MCF 10A (cell line): ENCODE measurements at regions of chr9 and their contacts with region 1.

Region 1: GRCh38 chr9:4740638-4741364 is at the start of gene AK3:
- DNase-seq: peak; percentile 85
- H3K4me3 Mint-ChIP-seq: peak within 1 kb of the TSS; percentile 90
- H3K27ac Mint-ChIP-seq: peak within 1 kb of the TSS; percentile 97
- H3K4me1 Mint-ChIP-seq: peaks cover 24% of the 10 kb centered on the region
- H3K27me3 Mint-ChIP-seq: no peaks in the 10 kb centered on the region
- CTCF ChIP-seq: no peak
- total RNA-seq, gene AK3: 61.0 and 64.1 TPM in 2 replicates

Region 2: GRCh38 chr9:4604678-4605095 is 136.1 kb before region 1 on chr9:
- CTCF ChIA-PET with region 1: interaction called, 5 read pairs
- POLR2A ChIA-PET with region 1: no interaction called
- intact Hi-C with region 1: loop called (anchors 5 kb)
- DNase-seq: peak; percentile 82
- H3K4me3 Mint-ChIP-seq: no peak overlapping the region
- H3K27ac Mint-ChIP-seq: no peak overlapping the region
- H3K4me1 Mint-ChIP-seq: no peaks in the 10 kb centered on the region
- H3K27me3 Mint-ChIP-seq: no peaks in the 10 kb centered on the region
- CTCF ChIP-seq: peak; percentile 61

Region 3: DNA sequence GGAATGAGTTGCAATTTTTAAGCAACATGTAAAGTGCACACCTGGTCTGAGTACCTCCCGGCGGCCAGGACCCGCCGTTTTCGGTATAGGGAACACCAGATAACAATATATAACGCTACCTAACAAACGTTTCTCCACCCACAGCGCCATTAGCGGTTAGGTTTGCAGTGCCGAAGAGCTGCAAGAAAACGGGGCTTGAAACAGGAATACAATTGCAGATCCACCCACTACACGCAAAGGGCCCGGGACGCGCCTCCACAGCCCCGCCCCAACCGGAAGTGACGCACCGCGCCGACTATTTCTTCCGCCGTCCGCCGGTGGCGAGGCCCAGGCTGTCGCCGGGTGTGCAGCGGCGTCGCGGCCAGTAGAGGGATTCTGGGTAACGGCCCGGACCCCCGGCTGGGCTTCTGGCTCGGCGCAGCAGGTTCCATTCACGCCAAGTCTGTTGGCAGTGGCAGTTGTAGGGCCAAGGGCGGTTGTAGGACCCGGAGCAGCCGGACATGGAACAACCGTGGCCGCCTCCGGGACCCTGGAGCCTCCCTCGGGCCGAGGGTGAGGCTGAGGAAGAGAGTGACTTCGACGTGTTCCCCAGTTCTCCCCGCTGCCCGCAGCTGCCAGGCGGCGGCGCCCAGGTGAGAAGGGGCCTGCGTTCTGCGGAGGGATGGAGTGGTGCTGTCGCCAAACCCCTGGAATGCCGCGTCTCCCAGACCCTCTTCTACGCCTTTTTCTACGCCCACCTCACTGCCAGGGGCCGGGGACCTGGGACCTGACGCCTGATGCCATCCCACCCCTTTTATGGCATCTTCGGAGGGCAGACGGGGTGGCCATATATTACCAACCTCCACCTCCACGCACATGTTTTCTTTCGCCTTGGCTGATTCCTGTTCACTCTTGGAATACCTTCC is 61.3 kb before region 1 on chr9 and contains the start of gene CDC37L1:
- CTCF ChIA-PET with region 1: interaction called, 5 read pairs
- POLR2A ChIA-PET with region 1: interaction called, 48 read pairs
- intact Hi-C with region 1: loop called (anchors 1 kb)
- DNase-seq: peak; percentile 94
- H3K4me3 Mint-ChIP-seq: no peak within 1 kb of the TSS
- H3K27ac Mint-ChIP-seq: no peak within 1 kb of the TSS
- H3K4me1 Mint-ChIP-seq: peaks cover 22% of the 10 kb centered on the region
- H3K27me3 Mint-ChIP-seq: no peaks in the 10 kb centered on the region
- CTCF ChIP-seq: peak; percentile 57
- total RNA-seq, gene CDC37L1: 13.8 and 20.4 TPM in 2 replicates

Region 4: DNA sequence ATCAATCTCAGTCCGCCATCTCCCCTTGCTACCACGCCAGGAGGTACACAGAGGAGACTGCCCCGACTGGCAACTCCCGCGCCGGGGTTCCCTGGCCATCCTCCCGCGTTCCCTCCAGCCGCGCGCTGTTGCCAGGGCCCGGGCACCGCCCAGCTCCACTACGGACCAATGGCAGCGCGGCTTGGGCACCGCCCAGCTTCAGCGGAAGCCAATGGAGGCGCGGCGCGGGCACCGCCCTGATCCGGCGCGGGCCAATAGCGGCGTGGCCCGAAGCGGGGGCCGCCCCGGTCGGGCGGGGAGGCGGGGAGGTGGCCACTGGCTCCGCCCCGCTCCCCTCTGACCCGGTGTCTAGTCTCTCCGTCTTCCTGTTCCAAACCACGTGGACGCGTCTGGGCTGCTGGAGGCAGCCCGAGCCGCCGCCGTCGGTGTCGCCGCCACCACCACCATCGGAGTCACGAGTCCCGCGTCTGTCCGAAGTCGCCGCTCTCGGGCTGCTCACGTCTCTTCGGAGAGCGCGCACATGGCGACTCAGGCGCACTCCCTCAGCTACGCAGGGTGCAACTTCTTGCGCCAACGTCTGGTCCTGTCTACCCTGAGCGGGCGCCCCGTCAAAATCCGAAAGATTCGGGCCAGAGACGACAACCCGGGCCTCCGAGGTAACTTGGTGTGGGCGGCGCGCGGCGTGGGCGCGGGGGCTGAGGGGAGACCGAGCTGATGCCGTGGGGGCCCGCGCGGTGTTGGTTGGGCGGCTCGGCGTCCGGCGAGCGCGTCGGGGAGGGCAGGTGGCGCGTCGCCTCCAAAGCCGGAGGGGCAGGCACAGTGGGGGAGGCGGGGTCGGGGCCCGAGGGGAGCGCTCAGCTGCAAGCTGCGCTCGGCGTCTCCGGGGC is 52.0 kb after region 1 on chr9 and contains the start of gene RCL1:
- CTCF ChIA-PET with region 1: interaction called, 9 read pairs
- POLR2A ChIA-PET with region 1: interaction called, 43 read pairs
- intact Hi-C with region 1: no loop called
- DNase-seq: peak; percentile 95
- H3K4me3 Mint-ChIP-seq: peak within 1 kb of the TSS; percentile 100
- H3K27ac Mint-ChIP-seq: peak within 1 kb of the TSS; percentile 85
- H3K4me1 Mint-ChIP-seq: peaks cover 20% of the 10 kb centered on the region
- H3K27me3 Mint-ChIP-seq: no peaks in the 10 kb centered on the region
- CTCF ChIP-seq: no peak
- total RNA-seq, gene RCL1: 20.2 and 27.8 TPM in 2 replicates

Region 5: GRCh38 chr9:5628530-5629311 is 887.9 kb after region 1 on chr9 and contains the start of gene RIC1:
- CTCF ChIA-PET with region 1: no interaction called
- POLR2A ChIA-PET with region 1: interaction called, 25 read pairs
- intact Hi-C with region 1: no loop called
- DNase-seq: peak; percentile 89
- H3K4me3 Mint-ChIP-seq: peak within 1 kb of the TSS; percentile 88
- H3K27ac Mint-ChIP-seq: peak within 1 kb of the TSS; percentile 92
- H3K4me1 Mint-ChIP-seq: peaks cover 20% of the 10 kb centered on the region
- H3K27me3 Mint-ChIP-seq: no peaks in the 10 kb centered on the region
- CTCF ChIP-seq: no peak
- total RNA-seq, gene RIC1: 21.3 and 23.1 TPM in 2 replicates